PC-9 (cell line): ENCODE measurements at regions of chr6 and their contacts with region 1.

Region 1: GRCh38 chr6:6614096-6614982 is 25.8 kb downstream of the LY86 start:
- DNase-seq: no peak
- H3K4me3 ChIP-seq: no peak overlapping the region
- H3K27ac ChIP-seq: no peak overlapping the region
- H3K4me1 ChIP-seq: no peaks in the 10 kb centered on the region
- H3K27me3 ChIP-seq: 0 out of 2 replicates have a peak, but pooled peaks cover 13% of the 10 kb centered on the region
- CTCF ChIP-seq: no peak

Region 2: GRCh38 chr6:6395581-6396197 is 218.7 kb before region 1 on chr6:
- CTCF ChIA-PET with region 1: no interaction called
- POLR2A ChIA-PET with region 1: interaction called, 15 read pairs
- intact Hi-C with region 1: no loop called
- DNase-seq: no peak
- H3K4me3 ChIP-seq: no peak overlapping the region
- H3K27ac ChIP-seq: no peak overlapping the region
- H3K4me1 ChIP-seq: no peaks in the 10 kb centered on the region
- H3K27me3 ChIP-seq: no peaks in the 10 kb centered on the region
- CTCF ChIP-seq: no peak

Region 3: GRCh38 chr6:6599468-6599873 is 14.9 kb before region 1 on chr6:
- CTCF ChIA-PET with region 1: no interaction called
- POLR2A ChIA-PET with region 1: no interaction called
- intact Hi-C with region 1: no loop called
- DNase-seq: no peak
- H3K4me3 ChIP-seq: no peak overlapping the region
- H3K27ac ChIP-seq: no peak overlapping the region
- H3K4me1 ChIP-seq: peaks cover 12% of the 10 kb centered on the region
- H3K27me3 ChIP-seq: no peaks in the 10 kb centered on the region
- CTCF ChIP-seq: no peak